ENCODE measurements at regions of chr3 and their contacts with region 1.

Region 1: DNA sequence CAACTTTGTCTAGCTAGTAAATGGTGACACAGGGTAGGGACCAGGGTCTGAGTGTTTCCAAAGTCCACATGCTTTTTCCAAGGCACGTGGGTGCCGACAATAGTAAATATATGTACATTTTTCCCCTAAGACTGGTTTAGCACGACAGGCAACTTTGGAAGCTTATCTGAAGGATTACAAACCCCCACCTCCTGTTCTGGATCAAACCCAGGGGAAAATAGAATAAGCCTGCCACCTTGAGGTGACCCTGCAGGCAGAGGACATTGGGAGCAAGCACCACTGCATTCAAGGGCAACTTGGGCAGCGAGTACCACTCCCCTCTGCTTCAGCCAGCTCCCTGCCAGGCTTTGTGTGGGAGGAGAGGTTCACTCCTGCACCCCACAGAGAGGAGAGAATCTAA is 44.8 kb downstream of the KBTBD12 start:
- DNase-seq: peak; percentile 8
- ATAC-seq: no peak
- H3K4me3 ChIP-seq: no peak overlapping the region
- H3K4me3 Mint-ChIP-seq: no peak overlapping the region
- H3K27ac ChIP-seq: no peak overlapping the region
- H3K27ac Mint-ChIP-seq: no peak overlapping the region
- H3K4me1 ChIP-seq: no peaks in the 10 kb centered on the region
- H3K4me1 Mint-ChIP-seq: no peaks in the 10 kb centered on the region
- H3K27me3 ChIP-seq: no peaks in the 10 kb centered on the region
- H3K27me3 Mint-ChIP-seq: peaks cover 3% of the 10 kb centered on the region
- CTCF ChIP-seq: no peak

Region 2: GRCh38 chr3:127791211-127791946 is 168.5 kb before region 1 on chr3:
- CTCF ChIA-PET with region 1: interaction called, 12 read pairs
- POLR2A ChIA-PET with region 1: no interaction called
- intact Hi-C with region 1: no loop called
- DNase-seq: peak; percentile 35
- ATAC-seq: peak; percentile 67
- H3K4me3 ChIP-seq: no peak overlapping the region
- H3K4me3 Mint-ChIP-seq: no peak overlapping the region
- H3K27ac ChIP-seq: no peak overlapping the region
- H3K27ac Mint-ChIP-seq: peak overlapping the region; percentile 0
- H3K4me1 ChIP-seq: peaks cover 0 to 4% of the 10 kb centered on the region in 2 donors
- H3K4me1 Mint-ChIP-seq: peaks cover 5% of the 10 kb centered on the region
- H3K27me3 ChIP-seq: no peaks in the 10 kb centered on the region
- H3K27me3 Mint-ChIP-seq: no peaks in the 10 kb centered on the region
- CTCF ChIP-seq: no peak

Region 3: GRCh38 chr3:128623762-128624176 is 663.9 kb after region 1 on chr3:
- CTCF ChIA-PET with region 1: no interaction called
- POLR2A ChIA-PET with region 1: no interaction called
- intact Hi-C with region 1: no loop called
- DNase-seq: no peak
- ATAC-seq: peak; percentile 24
- H3K4me3 ChIP-seq: no peak overlapping the region
- H3K4me3 Mint-ChIP-seq: no peak overlapping the region
- H3K27ac ChIP-seq: no peak overlapping the region
- H3K27ac Mint-ChIP-seq: no peak overlapping the region
- H3K4me1 ChIP-seq: peaks cover 0 to 7% of the 10 kb centered on the region in 2 donors
- H3K4me1 Mint-ChIP-seq: peaks cover 17% of the 10 kb centered on the region
- H3K27me3 ChIP-seq: no peaks in the 10 kb centered on the region
- H3K27me3 Mint-ChIP-seq: no peaks in the 10 kb centered on the region
- CTCF ChIP-seq: no peak